Posterior cingulate gyrus (tissue), 11 donors: ENCODE measurements at regions of chr22 and their contacts with region 1.

Region 1: GRCh38 chr22:26511857-26512793 is at the start of gene TFIP11:
- DNase-seq: peak; percentile 95 to 99 (median 98)

Region 2: GRCh38 chr22:26483439-26484359 is 28.4 kb before region 1 on chr22 and contains the starts of genes HPS4 and SRRD:
- intact Hi-C with region 1: loop called (anchors 2 kb)
- DNase-seq: peak; percentile 75 to 98 (median 82)